ENCODE measurements at regions of chr2 and their contacts with region 1.

Region 1: DNA sequence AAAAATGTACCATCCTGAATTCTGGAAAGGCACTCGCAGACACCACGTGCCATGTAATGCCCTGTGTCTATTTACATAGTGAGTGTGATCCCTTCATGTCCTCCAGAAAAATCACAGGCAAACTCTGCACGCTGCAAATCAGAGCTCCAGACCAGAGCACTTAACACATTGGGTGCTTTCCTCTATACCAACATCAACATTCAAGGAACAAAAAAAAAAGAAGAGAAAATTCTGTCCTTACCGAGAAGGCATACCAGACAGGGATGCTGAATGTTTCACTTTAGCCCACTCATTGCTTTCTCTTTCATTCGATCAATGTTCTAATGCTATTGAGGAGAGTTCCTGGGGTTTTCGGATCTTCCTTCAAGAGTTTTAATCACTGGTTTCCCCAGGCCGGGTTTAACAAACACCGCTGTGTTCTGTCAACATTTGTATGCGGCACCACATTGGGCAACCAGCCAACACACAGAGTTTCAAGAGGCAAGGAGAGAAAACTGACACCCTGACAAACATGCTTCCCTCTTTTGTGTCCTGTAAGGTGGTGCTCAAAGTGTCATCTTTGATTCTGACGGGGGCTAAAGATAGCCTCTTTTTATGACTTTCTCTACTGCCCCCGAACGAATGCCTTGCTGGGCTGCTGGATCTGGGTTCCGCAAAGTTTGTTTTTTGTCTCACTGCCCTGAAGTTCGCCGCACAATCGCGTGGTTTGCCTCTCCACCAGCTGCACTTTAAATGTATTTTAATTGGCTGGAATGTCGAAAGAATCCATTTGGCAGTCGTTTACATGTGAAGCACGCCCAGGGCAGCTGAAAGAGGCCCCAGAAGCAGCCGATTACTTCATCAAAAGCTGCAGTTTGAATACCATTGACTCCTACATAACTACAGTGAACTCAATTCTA is 106.4 kb upstream of the NCKAP5 start:
- DNase-seq: no peak
- ATAC-seq: peak; percentile 72

Region 2: DNA sequence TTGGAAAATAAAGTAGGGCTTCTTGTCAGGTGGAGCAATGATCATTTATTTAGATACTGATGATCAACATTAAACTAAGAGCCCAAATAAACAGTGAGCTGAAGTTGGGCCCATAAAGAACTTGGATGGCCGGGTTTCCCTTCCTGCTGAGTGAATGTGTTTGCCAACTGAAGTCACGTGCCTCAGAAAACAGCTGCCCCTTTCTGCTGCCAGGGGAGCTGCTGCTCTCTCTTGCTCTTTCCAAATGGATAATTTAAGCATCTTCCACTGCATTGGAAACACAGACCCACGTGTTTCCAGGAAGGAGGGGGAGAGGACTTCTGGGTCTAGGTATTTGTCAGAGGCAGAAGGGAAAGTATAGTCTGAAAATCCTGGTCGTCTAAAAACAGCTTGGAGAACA is 83.5 kb before region 1 on chr2:
- intact Hi-C with region 1: loop called (anchors 5 kb)
- DNase-seq: no peak
- ATAC-seq: peak; percentile 85

Region 3: GRCh38 chr2:133765658-133766057 is 91.0 kb after region 1 on chr2:
- intact Hi-C with region 1: loop called (anchors 5 kb)
- DNase-seq: no peak
- ATAC-seq: peak; percentile 93